Sigmoid colon (tissue), 7 donors: ENCODE measurements at regions of chr11 and their contacts with region 1.

Region 1: DNA sequence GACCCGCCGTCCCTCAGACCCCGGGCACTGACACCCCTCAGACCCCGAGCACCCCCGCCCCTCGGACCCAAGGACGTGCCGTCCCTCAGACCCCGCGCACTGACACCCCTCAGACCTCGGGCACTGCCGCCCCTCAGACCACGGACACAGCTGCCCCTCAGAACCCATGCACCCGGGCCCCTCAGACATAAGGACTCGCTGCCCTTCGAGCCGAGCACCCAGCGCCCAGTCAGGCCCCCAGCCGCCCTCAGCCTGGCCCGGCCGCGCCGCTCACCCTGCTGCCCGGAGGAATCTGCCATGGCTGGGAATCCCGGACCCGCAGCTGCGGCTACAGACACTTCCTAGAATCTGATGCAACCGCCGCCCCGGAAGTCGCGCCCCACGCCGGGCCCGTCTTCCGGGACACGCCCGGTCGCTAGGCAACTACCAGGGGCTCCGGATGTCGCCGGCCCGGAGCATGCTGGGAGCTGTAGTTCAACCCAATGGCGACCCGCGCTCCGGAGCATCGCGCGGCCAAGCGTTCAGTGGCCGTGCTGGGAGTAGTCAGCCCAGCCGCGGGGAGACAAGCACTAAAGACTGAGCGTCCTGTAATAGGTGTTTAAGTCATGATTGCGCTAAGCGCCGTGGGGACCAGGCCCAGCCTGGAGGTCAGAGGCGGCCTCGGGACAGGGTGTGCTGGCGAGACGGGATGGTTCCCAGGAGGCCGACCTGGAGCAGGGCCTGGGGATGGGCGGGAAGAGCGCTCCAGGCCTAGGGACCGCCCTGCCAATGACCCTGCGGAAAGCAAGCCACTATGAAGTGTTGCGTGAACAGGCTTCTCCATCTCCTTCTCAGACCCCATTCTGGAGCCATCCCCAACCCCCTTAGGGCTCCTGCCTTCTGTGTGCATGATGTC is at the start of gene CARS1:
- DNase-seq: peak; percentile 98
- H3K4me3 ChIP-seq: peak within 1 kb of the TSS; percentile 74 to 94 (median 84)
- H3K27ac ChIP-seq: peak within 1 kb of the TSS; percentile 83 to 94 (median 87)
- H3K4me1 ChIP-seq: peaks cover 0 to 39% (median 28%) of the 10 kb centered on the region in 4 donors
- H3K27me3 ChIP-seq: no peaks in the 10 kb centered on the region
- CTCF ChIP-seq: no peak
- EP300 ChIP-seq: peak in 2 of 4 donors; percentile 46 to 66
- POLR2A ChIP-seq: peak; percentile 41 to 62
- total RNA-seq, gene CARS1: 34.6 to 49.0 (median 39.6) TPM

Region 2: DNA sequence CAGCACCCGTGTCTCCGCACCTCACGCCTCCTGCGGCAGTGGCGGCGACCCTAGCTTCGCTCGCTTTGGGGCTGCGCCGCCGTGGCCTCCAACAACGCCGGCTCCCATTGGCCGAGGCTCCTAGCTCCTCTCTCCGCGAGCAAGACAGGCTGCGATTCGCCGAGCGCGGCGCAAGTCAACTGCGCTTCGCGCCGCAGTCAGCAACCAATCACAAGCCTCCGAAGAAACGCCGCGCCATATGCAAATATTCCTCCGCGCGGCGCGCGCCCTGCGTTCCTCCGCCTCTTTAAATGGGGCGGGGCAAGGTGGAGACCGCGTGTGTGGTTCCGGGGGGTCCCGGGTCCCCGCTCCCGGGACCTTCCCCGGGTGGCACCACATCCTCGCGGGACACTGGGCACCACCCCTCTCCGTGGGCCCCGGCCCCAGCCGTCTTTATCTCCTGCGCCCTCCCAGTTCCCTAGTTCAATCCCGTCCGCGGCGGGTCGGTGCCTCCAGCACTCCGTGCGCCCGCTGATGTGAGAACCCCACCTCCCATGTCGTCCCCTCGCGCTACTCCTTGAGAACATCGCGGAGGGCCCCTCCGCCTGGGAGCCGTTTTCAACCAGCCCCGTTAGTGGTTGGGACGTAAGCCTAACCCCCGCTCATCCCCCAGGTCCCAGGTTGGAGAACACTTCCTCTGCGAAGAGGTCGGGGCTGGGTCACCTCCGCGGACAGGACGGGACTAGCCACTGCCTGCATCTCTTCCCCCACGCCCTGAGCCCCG is 64.9 kb before region 1 on chr11 and contains the start of gene NAP1L4:
- intact Hi-C with region 1: loop called (anchors 5 kb)
- DNase-seq: peak; percentile 98
- H3K4me3 ChIP-seq: peak within 1 kb of the TSS; percentile 79 to 95 (median 90)
- H3K27ac ChIP-seq: peak within 1 kb of the TSS; percentile 92 to 98 (median 95)
- H3K4me1 ChIP-seq: peaks cover 0 to 48% (median 45%) of the 10 kb centered on the region in 4 donors
- H3K27me3 ChIP-seq: no peaks in the 10 kb centered on the region
- CTCF ChIP-seq: no peak
- EP300 ChIP-seq: no peak
- POLR2A ChIP-seq: no peak
- total RNA-seq, gene NAP1L4: 88.2 to 102 (median 95.4) TPM

Region 3: DNA sequence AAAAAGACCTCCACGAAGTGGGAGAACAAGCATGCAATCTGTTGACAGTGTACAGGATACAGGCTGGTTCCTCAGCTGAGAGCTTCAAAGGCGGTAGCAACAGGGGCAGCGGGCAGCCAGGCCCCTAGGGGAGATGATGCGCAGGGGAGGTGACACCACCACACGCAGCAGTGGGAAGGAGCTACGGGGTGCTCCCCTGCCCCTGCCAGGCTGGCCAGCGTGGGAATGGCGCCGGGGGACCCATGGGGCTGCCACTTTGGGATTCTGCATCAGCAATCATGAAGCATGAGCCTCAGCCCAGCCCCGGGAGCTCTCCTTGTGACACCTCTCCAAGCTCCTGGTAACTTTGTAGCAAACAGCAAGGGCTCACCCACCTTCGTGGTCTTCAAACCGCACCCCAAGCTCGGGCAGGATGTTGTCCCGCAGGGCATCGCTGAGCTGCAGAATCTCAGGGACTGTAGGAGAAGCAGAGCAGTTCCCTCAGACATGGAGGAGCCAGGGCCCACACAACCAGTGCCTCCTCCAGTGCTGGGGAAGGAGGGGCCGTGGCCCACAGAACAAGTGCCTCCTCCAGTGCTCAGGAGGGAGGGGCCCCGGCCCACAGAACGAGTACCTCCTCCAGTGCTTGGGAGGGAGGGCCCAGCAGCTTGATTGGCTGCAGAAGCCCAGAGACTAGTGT is 50.7 kb before region 1 on chr11:
- intact Hi-C with region 1: no loop called
- DNase-seq: peak; percentile 63
- H3K4me3 ChIP-seq: no peak overlapping the region
- H3K27ac ChIP-seq: no peak overlapping the region
- H3K4me1 ChIP-seq: peaks cover 0 to 10% (median 6%) of the 10 kb centered on the region in 4 donors
- H3K27me3 ChIP-seq: no peaks in the 10 kb centered on the region
- CTCF ChIP-seq: no peak
- EP300 ChIP-seq: no peak
- POLR2A ChIP-seq: no peak

Region 4: DNA sequence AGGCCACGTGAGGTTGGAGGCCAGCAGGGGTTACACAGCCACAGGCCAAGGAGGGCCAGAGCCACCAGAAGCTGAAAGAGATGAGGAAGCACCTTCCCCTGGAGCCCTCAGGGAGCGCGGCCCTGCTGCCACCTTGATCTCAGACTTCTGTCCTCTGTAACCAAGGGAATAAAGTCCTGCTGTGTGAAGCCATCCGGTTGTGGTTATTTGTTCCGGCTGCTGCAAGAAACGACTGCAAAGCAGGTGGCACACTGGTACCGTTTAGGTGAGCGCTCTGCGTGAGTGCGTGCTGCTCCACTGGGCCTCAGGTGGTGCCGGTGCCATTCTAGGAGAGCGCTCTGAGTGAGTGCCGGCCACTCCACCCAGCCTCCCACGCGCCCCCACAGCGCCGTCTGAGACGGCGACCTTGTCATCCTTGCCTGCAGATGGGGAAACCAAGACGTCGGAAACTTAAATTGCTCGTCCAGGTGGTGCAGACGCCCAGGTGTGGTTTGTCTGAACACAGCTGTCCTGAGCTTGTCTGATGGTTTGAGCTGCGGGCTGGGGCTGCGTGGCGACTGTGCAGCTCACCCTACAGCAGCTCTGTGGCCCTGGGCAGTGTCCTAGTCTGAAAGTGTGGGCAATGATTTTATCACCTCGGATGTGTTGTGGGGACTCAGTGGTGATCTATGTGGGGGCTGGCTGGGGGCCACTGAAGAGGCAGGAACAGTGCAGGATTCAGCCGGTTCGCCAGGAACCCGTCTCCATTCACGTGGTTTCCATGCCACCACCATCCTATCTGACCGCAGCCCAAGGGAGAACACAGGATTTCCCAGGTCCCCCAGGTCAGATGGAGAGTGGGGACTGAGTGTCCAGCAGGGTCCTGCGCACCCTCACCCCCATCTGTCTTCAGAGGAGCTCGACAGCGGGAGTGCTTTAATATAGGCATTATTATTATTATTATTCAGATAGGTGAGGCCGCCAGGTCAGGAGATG is 165.9 kb after region 1 on chr11:
- intact Hi-C with region 1: no loop called
- DNase-seq: no peak
- H3K4me3 ChIP-seq: no peak overlapping the region
- H3K27ac ChIP-seq: no peak overlapping the region
- H3K4me1 ChIP-seq: no peaks in the 10 kb centered on the region
- H3K27me3 ChIP-seq: peaks cover 0 to 56% (median 16%) of the 10 kb centered on the region in 3 donors
- CTCF ChIP-seq: no peak
- EP300 ChIP-seq: no peak
- POLR2A ChIP-seq: no peak